ENCODE measurements at regions of chr6 and their contacts with region 1.

Region 1: DNA sequence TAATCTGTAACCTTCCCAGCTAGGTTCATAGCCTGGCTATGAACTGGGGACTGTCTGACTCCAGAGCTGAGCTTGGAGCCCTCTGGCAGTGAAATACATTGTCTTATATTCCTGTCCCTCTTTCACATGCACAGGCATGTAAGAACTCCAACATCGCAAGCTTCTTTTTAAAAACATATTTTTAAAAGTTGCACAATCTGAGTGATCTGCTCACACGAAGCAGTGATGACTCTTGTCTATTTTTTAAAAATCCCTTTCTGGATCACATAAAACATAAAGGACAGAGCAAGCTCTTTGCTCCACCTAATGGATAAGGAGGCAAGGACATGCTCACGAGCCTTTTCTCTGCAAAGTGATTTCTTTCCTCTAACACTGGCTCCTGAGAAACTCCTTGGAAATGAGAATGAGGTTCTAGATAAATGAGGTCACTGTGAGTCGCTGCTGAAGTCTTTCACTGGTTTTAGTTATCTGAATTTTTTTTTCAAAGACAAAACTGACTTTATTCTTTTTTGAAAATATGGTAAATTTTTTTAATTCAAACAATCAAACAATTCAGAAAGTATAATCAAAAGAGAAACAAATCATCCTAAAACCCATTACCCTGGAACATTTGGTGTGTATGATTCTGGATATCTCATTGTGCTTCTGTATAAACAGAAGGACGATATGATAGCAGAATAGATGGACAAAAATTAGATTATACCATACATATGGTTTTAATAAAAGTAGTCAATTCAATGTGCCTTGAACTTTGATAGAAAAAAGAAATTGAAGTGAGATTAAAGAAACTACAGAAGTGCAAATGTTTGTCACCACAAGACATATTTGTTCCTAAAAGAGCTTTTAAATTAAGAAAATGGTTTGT is 30.8 kb downstream of the IL20RA start:
- DNase-seq: peak; percentile 44
- H3K4me3 ChIP-seq: no peak overlapping the region
- CTCF ChIP-seq: peak; percentile 48

Region 2: GRCh38 chr6:136967876-136968752 is 45.9 kb before region 1 on chr6:
- CTCF ChIA-PET with region 1: interaction called, 68 read pairs
- POLR2A ChIA-PET with region 1: no interaction called
- DNase-seq: peak; percentile 10
- H3K4me3 ChIP-seq: no peak overlapping the region
- CTCF ChIP-seq: peak; percentile 65

Region 3: DNA sequence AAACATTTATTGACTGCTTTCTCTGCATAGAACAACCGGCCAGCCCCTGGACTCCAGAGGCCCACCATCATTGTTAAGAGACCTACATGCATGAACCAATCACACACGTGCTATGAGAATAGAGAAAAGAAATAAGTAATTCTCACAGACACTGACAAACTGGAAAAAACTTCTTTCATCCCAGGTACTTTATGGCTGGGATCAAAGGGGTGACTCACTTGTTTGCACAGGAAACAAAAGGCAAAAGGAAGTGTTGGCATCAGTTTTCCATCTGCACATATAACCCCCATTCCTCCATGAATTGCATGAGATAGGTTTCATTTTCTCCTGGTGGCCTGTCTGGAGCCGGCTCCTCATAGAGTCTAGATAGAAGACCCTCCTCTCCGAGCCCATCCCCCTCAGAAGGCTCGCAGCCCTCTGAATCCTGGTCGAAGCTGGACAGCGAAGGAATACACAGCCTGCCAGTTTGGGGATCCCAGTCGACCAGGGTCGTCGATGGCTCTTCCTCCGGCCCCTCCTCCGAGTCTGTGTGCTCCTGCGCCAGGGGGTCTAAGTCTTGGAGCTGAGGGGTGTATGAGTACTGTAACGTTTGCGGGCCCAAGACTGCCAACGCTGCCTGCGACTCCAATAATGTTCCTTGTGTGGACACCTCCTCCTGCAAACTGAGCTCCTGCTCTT is 12.5 kb before region 1 on chr6:
- CTCF ChIA-PET with region 1: interaction called, 10 read pairs
- POLR2A ChIA-PET with region 1: no interaction called
- DNase-seq: no peak
- H3K4me3 ChIP-seq: no peak overlapping the region
- CTCF ChIP-seq: no peak

Region 4: DNA sequence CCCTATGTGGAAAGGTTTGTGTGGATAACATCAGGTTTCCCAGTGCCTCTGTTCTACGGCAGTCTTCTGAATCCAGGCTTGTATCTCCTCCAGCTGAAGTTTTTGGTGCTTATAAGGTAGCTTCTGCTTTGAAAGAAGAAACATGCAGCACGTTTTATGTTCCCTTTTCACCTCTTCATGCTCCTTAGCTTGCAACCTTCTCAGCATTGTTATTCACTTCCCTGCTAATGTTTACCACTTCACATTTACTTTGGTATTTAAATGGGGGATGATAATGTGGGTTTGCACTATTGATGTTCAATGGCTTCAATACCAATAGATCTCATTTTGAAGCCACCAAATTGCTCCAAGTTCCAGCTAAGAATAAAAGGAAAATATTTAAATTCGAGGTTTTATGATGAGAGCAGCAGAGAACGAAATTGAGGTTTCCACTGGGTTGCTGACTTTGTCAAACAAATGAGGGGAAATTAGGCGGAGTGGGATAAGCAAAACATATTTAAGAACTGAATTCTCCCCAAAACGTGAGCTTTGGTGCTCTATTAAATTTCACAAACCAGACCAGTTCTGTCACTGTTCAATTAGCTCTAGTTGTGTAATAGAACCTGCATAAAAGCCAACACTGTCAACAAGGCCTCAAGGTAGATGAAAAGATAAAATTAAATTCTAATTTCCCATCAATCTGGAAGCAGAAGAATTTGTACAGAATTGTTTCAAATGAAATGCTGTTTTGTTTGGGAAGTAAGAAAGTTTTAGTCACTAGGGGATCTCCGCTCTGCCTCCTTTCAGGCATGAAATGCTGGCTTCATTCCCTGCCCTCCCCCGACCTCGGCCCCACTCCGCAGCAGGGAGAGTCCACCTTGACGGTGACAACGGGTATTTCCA is 158.1 kb after region 1 on chr6:
- CTCF ChIA-PET with region 1: no interaction called
- POLR2A ChIA-PET with region 1: no interaction called
- DNase-seq: no peak
- H3K4me3 ChIP-seq: no peak overlapping the region
- CTCF ChIP-seq: no peak

Measured in AG04449 (cell line).